ENCODE measurements at regions of chr17 and their contacts with region 1.

Region 1: DNA sequence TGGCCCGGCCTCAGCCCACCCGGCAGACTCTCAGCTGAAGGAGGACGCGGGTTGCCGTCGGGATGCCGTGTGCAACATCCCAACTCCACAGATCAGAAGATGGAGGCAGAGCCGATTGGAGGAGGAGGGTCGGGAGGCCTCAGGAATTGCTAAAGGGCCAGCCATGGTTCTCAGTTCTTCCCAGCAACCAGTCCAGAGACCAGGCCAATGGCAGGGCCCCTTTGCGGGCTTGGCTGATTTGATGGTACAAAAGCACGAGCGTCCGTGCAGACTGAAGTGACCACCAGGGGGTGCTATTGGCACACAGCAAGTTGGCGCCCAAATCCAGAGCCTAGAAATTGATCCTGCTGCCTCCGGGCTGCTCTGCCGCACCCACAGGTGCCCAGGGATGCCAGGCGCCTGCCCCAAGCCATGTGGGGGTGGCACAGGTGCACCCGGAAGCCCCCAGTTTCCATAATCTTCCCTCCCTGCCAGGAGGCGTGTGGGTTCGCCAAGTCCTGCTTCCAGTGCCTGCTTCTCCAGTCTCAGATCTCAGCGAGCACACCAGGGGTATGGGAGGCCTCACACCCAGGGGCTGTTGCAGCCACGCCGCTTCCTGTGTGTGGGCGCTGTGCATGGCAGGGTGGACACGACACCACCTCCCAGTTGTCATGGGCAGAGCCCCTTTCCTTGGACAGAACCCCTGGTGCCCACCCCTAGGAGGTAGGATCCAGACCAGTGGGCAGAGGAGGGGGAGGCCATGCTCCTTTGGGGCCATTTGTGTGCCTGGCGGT is 7.1 kb upstream of the TEX19 start:
- DNase-seq: peak; percentile 75 to 91
- ATAC-seq: peak; percentile 83

Region 2: GRCh38 chr17:82414548-82415281 is 62.8 kb after region 1 on chr17:
- intact Hi-C with region 1: loop called (anchors 5 kb)
- DNase-seq: peak; percentile 56 to 83
- ATAC-seq: peak; percentile 48

Region 3: GRCh38 chr17:82551779-82552457 is 200.0 kb after region 1 on chr17:
- intact Hi-C with region 1: loop called in 1 of 2 experiments (anchors 10 kb)
- DNase-seq: peak; percentile 76 to 82
- ATAC-seq: peak; percentile 81

Region 4: GRCh38 chr17:82775001-82775823 is 423.3 kb after region 1 on chr17:
- intact Hi-C with region 1: loop called in 1 of 2 experiments (anchors 10 kb)
- DNase-seq: peak in 1 of 2 donors; percentile 78
- ATAC-seq: peak; percentile 44

Measured in left colon (tissue), 2 donors.